Uterus (tissue), 4 donors: ENCODE measurements at regions of chr7 and their contacts with region 1.

Region 1: DNA sequence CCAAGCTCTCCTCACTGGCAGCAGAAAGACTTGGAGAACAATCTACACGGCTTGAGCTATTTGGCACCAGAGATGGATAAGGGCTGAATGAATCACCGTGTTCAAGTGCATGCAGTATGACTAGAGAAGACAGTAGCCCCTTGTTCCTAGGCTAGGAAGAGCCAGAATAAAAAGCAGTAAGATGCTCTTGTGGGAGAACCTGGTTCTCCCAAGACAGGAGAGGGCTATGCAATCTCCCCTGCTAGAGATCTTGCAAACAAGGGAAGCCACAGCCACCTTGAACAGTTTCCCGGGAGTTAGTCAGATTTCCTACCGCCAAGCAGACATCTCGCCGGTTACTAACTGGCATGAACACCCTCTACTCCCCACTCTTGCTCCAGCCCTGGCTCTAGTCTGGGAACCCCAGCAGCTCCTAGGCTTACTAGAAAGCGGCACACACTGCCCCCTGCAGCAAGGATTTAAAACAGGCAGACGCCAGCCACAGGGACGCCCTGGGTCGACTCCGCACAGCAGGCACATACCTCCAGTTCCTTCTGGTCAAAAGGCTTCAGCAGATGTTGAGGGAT is 107.3 kb downstream of the SMURF1 start:
- DNase-seq: peak in 1 of 2 donors; percentile 33
- H3K4me3 ChIP-seq: no peak overlapping the region
- H3K27ac ChIP-seq: no peak overlapping the region
- H3K4me1 ChIP-seq: peaks cover 0 to 7% of the 10 kb centered on the region in 2 donors
- H3K27me3 ChIP-seq: no peaks in the 10 kb centered on the region
- CTCF ChIP-seq: peak in 1 of 4 experiments; percentile 25
- POLR2A ChIP-seq: no peak

Region 2: DNA sequence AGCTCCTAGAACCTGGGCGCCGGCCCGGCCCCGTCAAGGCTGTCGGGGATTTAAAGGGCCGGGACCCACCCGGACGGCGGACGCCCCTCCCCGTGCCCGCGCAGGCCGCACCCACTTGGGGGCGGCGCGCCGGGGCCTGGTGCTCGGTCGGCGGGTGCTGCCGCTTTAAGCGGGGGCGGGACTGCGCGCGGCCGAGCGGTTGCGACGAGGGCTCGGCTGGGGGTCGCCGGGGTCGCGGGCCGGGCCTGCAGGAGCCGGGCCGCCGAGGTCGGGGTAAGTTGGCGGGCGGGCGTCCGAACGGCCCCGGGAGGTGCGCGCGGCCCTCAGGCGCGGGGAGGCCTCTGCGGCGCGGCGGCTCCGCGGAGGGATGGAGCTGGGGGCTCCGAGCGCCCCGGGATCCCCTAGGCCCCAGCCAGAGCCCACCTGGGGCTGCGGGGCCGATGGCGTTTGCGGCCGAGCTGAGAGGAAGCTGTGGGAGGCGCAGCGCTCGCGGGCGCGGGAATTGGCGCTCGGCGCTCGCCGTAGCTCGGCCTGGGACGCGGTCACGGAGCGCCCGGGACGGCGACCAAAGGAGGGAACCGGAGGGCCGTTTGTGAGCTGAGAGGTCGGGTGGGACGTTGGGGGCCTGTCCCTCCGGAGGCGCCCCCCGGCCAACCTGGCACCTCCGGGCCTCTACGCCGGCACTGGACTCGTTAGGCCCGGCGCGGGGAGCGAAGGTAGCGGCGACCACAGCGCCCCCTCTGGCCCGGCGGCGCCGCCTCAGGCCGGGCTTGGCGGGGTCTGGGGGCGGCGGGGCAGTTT is 158.1 kb before region 1 on chr7 and contains the start of gene TRRAP:
- intact Hi-C with region 1: no loop called
- DNase-seq: peak; percentile 48 to 68
- H3K4me3 ChIP-seq: peak within 1 kb of the TSS; percentile 76 to 89
- H3K27ac ChIP-seq: peak within 1 kb of the TSS; percentile 91 to 96
- H3K4me1 ChIP-seq: peaks cover 0 to 9% of the 10 kb centered on the region in 2 donors
- H3K27me3 ChIP-seq: no peaks in the 10 kb centered on the region
- CTCF ChIP-seq: peak; percentile 67 to 96 (median 89)
- POLR2A ChIP-seq: peak in 1 of 2 donors; percentile 47
- total RNA-seq, gene TRRAP: 19.7 to 62.3 (median 31.1) TPM

Region 3: GRCh38 chr7:98993024-98993897 is 43.4 kb before region 1 on chr7:
- intact Hi-C with region 1: no loop called
- DNase-seq: no peak
- H3K4me3 ChIP-seq: no peak overlapping the region
- H3K27ac ChIP-seq: no peak overlapping the region
- H3K4me1 ChIP-seq: no peaks in the 10 kb centered on the region
- H3K27me3 ChIP-seq: no peaks in the 10 kb centered on the region
- CTCF ChIP-seq: no peak
- POLR2A ChIP-seq: no peak

Region 4: GRCh38 chr7:99171731-99172130 is 135.1 kb after region 1 on chr7:
- intact Hi-C with region 1: no loop called
- DNase-seq: no peak
- H3K4me3 ChIP-seq: no peak overlapping the region
- H3K27ac ChIP-seq: no peak overlapping the region
- H3K4me1 ChIP-seq: no peaks in the 10 kb centered on the region
- H3K27me3 ChIP-seq: no peaks in the 10 kb centered on the region
- CTCF ChIP-seq: no peak
- POLR2A ChIP-seq: no peak

Region 5: DNA sequence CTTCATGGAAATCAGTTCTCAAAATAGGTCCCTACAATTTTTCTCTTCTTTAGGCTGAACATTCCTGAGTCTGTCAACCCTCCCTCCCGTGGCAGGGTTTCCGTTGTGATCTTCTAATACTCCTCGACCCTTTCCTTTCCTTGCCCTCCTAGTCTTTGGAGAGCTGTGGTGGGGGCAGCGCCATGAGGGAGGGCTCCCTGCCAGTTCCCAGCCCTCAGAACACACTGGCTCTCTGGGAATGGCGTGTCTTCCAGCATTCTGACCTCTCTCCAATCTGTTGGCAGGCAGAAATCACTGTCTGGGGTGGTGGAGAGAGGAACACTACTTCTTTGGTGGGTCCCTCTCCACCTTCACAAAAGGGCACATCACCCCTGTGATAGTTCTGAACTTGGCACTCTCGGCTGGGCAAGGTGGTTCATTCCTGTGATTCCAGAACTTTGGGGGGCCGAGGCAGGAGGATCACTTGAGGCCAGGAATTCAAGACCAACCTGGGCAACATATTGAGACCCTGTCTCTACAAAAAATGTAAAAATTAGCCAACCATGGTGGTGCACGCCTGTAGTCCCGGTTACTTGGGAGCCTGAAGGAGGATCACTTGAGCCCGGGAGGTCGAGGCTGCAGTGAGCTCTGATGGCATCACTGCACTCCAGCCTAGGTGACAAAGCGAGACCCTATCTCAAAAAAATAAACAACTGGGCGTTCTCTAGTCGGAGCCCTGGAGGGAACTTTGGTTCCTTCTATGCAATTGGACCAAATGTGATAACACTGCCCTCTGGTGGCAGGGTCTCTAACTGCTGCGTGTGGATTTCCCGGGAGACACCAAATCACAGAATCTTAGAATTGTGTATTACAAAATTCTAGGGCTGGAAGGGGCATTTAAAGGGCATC is 275.9 kb after region 1 on chr7:
- intact Hi-C with region 1: loop called (anchors 10 kb)
- DNase-seq: peak; percentile 50 to 55
- H3K4me3 ChIP-seq: no peak overlapping the region
- H3K27ac ChIP-seq: no peak overlapping the region
- H3K4me1 ChIP-seq: no peaks in the 10 kb centered on the region
- H3K27me3 ChIP-seq: no peaks in the 10 kb centered on the region
- CTCF ChIP-seq: peak; percentile 70 to 88 (median 78)
- POLR2A ChIP-seq: no peak